Posterior cingulate gyrus (tissue), 11 donors: ENCODE measurements at regions of chr12 and their contacts with region 1.

Region 1: DNA sequence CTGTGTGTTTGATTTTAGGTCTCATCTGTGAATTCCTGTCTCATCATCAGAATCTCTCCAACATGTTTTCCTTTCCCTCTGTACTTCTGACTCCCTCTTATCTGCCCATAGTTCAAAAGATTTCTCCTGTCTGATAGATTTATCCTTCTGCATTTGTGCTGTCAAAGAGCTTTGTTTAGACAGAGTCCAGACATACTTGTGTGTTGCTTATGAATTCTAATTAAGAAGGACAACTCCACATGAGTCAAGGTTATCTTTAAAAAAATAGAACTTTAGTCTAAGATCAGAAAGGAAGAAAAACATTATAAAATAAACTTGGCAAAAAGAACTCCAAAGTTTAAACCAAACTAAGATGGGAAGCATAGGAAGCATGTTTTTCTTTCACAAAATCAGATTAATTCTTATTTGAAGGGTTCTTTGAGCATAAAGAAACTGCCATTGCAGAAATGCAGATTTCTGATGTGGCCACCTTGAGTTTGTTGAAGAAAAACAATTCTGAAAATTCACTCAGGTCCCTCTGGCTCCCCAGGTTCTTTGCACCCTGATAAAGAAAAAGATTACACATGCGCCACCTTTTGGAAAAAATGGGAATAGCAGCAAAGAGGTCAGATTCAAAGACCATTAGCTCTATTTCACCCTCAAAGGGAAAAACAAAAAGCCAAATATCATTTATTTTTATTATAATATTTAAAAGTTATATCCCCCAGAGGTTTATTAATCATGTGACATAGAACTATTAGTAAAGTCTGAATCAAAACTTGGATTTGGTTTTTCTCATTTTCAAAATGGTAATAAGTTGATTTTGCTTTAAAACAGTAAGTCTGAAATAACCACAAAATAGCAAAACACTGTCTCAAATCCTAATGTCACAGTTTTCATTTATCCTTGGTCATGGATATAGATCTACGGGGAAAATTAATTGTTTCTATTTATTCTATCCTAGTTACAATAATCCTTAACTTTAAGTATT is 143.7 kb upstream of the DCN start:
- DNase-seq: peak in 1 of 10 donors; percentile 26

Region 2: DNA sequence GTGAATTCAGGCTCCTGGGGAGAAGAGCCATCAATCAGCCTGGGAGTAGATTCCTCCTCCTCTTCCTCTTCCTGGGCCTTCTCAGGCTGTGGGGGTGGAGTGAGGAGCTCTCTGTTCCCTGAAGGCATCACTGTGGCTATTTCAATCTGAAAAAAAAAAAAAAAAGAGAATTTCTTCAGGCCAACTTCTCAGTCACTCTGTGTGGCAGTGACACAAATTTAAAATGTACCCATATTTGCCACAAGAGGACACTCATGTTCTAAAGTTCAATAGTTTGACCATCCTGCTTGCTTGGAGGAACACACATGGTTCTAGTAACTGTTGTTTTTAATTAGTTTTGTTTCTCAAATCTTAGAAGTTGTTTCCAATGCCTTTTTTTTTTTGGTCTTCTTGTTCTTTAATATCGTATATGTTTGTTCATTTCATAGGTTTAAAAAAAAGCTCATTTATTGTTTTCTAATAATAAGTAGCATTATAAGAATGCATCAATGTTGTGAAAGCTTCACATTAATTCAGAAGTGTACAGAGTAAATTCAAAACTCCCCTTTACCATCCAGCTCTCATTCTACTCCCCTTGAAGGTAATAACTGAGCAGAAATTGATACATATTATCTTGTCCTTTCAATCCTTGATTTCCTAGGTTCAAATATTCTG is 348.1 kb before region 1 on chr12:
- intact Hi-C with region 1: loop called (anchors 5 kb)
- DNase-seq: peak in 1 of 10 donors; percentile 25

Region 3: GRCh38 chr12:91178139-91178561 is 148.2 kb before region 1 on chr12:
- intact Hi-C with region 1: loop called (anchors 1 kb)
- DNase-seq: no peak

Region 4: DNA sequence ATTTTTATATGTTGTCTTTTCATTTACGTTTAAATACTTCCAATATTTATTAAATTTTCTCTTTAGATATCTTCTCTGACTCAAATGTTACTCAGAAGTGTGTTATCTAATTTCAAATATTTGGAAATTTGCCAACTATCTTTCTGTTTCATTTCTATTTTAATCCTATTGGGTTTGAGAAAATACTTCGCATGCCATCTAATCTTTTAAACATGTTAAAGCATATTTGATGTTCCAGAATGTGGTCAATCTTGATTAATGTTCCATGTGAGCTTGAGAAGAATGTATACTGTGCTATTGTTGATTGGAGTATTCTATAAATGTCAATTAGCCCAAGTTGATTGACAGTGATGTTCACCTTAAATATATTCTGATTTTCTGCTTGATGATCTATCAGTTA is 131.8 kb before region 1 on chr12:
- intact Hi-C with region 1: loop called (anchors 5 kb)
- DNase-seq: no peak

Region 5: GRCh38 chr12:91603060-91603459 is 276.7 kb after region 1 on chr12:
- intact Hi-C with region 1: no loop called
- DNase-seq: no peak